ENCODE measurements at regions of chr2 and their contacts with region 1.

Region 1: DNA sequence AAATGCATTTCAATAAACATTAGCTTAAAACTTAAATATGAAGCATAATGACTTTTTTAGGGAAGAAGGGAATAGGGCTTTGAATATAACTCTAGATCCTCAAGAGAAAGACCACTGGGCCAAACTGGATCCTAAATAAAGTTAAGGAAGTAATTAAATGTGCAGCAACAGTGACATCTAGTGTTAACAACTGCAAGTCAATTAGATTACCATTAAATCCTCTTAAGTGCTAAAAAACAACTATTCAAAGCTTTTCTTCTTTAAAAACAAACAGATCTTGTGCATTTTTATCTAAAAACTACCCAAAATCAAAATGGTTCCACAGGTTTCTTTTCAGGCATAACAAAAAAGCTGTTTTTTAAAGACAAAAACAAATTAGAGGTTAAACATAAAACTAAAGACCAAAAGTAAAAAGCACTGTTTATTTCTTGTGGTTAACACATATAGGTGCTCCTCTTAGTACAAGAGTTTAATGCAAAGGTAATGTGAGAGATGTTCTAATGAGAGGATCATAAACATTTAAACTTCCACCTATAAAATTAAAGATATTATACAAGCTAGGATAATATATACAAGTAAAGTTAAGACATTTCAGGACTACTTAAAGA is 111.4 kb downstream of the THADA start:
- DNase-seq: no peak
- H3K4me3 Mint-ChIP-seq: no peak overlapping the region
- H3K27ac Mint-ChIP-seq: no peak overlapping the region
- H3K4me1 Mint-ChIP-seq: peaks cover 7% of the 10 kb centered on the region
- H3K27me3 Mint-ChIP-seq: no peaks in the 10 kb centered on the region

Region 2: GRCh38 chr2:42859006-42859552 is 625.3 kb before region 1 on chr2:
- intact Hi-C with region 1: loop called (anchors 1 kb)
- DNase-seq: peak; percentile 33
- H3K4me3 Mint-ChIP-seq: no peak overlapping the region
- H3K27ac Mint-ChIP-seq: no peak overlapping the region
- H3K4me1 Mint-ChIP-seq: no peaks in the 10 kb centered on the region
- H3K27me3 Mint-ChIP-seq: no peaks in the 10 kb centered on the region

Region 3: GRCh38 chr2:42974721-42975717 is 509.4 kb before region 1 on chr2:
- intact Hi-C with region 1: loop called (anchors 1 kb)
- DNase-seq: peak; percentile 19
- H3K4me3 Mint-ChIP-seq: no peak overlapping the region
- H3K27ac Mint-ChIP-seq: no peak overlapping the region
- H3K4me1 Mint-ChIP-seq: peaks cover 11% of the 10 kb centered on the region
- H3K27me3 Mint-ChIP-seq: peaks cover 6% of the 10 kb centered on the region

Region 4: DNA sequence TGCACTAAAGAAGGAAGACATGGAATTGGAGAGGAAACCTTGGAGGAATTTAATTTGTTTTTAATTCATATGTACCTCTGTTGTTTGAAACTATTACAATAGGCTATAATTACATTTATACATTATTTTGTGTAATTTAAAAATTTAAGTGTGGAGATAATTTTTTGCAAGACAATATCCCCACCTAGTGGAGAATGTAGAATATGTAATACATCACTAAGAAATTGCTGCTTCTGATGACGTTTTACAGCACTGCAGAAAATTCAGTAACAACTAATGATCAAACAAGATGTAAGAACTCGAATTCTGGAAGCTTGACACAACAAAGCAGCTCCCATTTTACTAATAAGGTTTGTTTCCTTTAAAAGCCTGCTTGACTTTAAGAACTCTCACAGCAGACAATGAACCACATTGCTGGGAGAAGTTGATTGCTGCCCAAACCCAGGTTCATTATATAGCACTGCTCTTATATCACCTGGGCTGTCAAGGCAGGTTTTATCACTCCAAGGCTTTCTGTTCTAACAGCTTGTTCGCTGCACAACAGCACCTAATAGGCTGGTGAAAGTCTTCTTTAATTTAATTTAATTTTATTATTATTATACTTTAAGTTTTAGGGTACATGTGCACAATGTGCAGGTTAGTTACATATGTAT is 58.0 kb after region 1 on chr2:
- intact Hi-C with region 1: loop called (anchors 1 kb)
- DNase-seq: no peak
- H3K4me3 Mint-ChIP-seq: no peak overlapping the region
- H3K27ac Mint-ChIP-seq: no peak overlapping the region
- H3K4me1 Mint-ChIP-seq: peaks cover 18% of the 10 kb centered on the region
- H3K27me3 Mint-ChIP-seq: no peaks in the 10 kb centered on the region

Measured in activated T-helper 1 cell treated with anti-CD3 and anti-CD28 coated beads, Interleukin-12 subunit alpha, Interleukin-12 subunit beta, Interleukin-2, Interleukin-4 antibody, amounts not matched to agents 30 ng/mL and 10 ng/mL and 1 ng/mL, durations not matched to agents 14 hours and 24 hours and 36 hours (primary cell).